Posterior vena cava (tissue), 2 donors: ENCODE measurements at regions of chr3 and their contacts with region 1.

Region 1: DNA sequence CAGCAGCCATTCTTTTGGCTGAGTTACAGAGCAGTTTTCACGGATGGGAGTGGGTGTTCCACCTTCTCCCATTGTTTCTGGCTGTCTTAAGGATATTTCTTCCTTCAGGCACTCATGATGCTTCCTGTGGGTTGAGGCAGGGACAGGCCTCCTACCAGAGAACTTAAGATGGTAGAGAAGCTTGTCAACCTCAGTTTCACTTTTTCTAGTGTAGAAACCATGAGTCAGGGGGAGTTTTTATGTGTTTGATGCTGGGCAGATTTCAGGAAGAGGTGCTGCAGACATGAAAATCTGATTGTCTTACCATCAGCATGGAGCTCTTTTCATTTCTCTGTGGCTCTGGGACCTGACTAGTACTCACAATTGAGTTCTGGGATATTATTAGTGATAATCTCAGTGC is 48.7 kb upstream of the VEPH1 start:
- DNase-seq: no peak

Region 2: GRCh38 chr3:157104928-157105652 is 446.9 kb before region 1 on chr3:
- intact Hi-C with region 1: no loop called
- DNase-seq: no peak

Region 3: GRCh38 chr3:157388976-157389375 is 163.0 kb before region 1 on chr3:
- intact Hi-C with region 1: no loop called
- DNase-seq: no peak

Region 4: DNA sequence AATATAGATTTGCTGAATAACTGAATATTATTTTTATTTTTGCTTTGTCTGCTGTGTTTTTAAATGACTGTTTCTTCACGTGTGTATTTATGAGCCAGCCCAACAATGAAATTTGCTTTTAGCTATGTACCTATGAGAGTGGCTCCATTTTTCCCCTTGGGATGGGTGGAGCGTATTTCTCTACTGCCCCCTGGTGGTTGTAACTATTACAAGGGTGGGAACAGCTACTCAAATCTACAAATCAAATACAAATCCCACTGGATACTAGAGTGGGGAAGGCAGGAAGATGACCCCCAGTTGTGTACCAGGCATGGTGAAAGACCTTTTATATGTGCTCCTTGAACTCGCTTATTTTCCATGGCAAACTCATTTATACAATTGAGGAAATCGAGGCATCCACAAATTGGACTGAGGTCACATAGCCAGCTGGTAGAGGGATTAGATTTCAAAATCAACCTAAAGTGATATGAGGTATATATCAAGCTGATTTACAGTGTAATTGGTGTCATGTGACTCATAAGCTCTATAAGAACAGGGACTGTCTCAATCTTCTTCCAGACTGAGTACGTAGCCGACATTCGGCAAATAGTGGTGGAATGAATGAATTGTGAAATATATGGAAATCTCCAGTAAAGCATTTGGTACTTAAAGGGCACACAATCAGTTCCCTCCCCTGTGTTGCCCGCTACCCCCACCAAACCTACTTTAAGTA is 20.8 kb after region 1 on chr3:
- intact Hi-C with region 1: loop called in 1 of 2 experiments (anchors 1 kb)
- DNase-seq: no peak

Region 5: DNA sequence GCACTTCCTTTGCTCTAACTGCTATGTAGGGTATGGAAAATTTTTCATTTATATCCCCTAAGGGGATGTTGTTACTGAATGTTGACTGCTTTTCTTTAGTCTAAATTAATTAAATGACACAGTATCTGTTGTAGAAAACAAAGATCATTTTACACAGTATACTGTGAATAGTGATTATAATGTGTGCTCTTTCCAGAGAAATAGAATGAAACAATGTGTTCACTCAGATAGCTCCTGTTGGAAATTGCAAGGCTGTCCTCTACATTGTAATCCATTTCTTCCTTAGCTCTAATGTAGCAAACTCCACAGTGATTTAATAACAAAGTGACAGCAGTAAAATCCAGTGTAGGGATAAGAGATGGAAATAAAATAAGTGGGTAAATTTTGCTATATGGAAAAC is 110.2 kb after region 1 on chr3:
- intact Hi-C with region 1: no loop called
- DNase-seq: no peak

Region 6: GRCh38 chr3:159130108-159130507 is 1578.1 kb after region 1 on chr3:
- intact Hi-C with region 1: no loop called
- DNase-seq: no peak